Calu3 (cell line): ENCODE measurements at regions of chr15 and their contacts with region 1.

Region 1: DNA sequence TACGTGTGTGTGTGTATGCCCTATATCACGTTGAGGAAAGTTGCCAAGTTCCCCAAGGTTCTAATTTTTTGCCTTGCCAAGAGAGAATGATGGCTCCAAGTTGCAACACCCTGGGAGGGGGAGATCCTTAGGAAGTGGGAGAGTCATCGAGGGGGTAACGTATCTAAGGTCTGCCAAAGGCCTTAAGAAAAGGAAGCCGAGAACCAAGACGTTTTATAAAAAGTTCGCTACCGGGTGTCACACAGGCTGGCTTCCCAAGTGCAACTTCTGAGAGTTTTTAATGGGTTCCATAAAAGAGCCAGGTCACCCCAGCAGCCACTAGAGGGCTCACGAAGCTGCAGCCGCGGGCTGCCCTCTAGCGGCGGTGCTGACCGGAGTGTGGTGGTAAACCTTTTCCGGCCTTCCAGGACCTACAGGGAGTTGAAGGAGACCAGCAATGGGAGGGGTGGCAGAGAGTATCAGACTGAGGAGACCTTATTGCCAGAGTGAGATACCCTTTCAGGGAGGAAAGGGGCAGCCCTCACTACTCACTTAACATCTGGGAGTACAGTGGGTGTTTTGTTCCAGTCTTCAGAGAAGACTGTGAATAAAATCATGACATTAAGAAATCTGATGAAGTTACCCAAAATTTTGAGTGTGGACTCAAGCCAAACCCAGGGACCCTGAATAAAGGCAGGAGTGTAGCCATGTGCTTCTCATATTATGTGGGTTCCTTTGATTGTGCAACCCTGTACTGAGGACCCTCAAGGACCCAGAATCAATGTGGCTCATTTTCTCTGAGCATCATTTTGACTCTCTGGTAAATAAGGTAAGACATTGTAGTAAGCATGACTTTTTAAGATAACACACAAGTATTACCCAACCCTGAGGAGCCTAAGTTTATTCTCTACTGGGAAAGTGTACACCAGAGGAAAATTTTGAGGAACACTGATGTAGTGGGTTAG is 2.5 kb upstream of the RFX7 start:
- DNase-seq: peak; percentile 96
- H3K4me3 Mint-ChIP-seq: peak overlapping the region; percentile 87
- H3K27ac Mint-ChIP-seq: peak overlapping the region; percentile 78
- H3K4me1 Mint-ChIP-seq: peaks cover 39% of the 10 kb centered on the region
- H3K27me3 Mint-ChIP-seq: no peaks in the 10 kb centered on the region
- CTCF ChIP-seq: peak; percentile 100

Region 2: DNA sequence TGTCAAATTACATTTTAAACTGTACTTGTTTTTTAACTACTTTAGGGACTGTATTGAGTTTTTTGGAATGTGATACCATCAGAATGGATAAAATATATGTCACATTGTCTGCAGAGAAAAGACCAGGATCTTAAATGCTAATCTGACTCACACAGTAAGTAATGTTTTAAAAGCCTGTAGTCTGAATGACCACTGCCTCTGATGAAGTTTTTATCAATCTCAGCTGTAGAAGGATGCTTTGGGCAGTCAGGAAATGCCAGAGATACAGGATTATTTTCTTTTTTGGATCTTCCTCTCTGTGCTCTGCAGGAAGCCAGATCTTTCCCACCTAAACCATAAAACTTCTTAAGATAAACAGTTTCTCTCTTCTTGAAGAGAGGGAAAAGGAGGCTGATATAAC is 430.1 kb before region 1 on chr15:
- CTCF ChIA-PET with region 1: no interaction called
- intact Hi-C with region 1: no loop called
- DNase-seq: no peak
- H3K4me3 Mint-ChIP-seq: no peak overlapping the region
- H3K27ac Mint-ChIP-seq: no peak overlapping the region
- H3K4me1 Mint-ChIP-seq: no peaks in the 10 kb centered on the region
- H3K27me3 Mint-ChIP-seq: no peaks in the 10 kb centered on the region
- CTCF ChIP-seq: no peak

Region 3: DNA sequence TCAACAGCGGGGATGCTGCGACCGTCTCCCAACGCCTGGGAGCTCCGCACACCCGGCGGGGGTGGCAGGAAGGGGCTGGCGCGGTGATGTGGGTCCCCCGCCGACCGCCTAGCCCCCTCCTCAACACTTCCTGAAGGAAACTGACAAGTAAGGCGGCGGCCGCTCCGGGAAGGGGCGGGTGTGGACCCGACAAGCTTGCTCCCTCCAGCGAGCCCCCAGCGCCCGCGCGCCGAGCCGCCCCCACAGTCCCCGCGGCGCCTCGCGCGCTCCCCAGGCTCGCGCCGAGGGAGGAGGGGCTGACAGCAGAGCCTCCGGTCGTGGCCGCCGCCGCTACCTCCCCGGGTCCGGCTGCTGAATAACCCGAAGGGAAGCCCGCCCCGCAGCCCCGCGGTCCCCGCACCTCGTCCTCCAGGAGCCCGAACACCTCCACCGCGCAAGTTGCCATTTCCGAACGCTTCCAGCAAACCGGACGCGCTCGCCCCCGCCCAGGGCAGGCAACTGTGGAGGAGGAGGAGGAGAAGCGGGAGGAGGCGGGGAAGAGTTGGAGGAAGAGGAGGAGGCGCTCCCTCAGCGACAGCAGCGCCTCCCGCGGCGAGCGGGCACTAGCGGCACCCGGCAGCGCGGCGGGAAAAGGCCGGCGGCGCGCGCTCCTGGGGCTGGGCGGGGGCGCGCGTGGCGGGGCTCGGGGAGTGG is 252.9 kb before region 1 on chr15 and contains the start of gene NEDD4:
- CTCF ChIA-PET with region 1: no interaction called
- intact Hi-C with region 1: loop called (anchors 5 kb)
- DNase-seq: peak; percentile 93
- H3K4me3 Mint-ChIP-seq: peak within 1 kb of the TSS; percentile 89
- H3K27ac Mint-ChIP-seq: peak within 1 kb of the TSS; percentile 86
- H3K4me1 Mint-ChIP-seq: peaks cover 42% of the 10 kb centered on the region
- H3K27me3 Mint-ChIP-seq: no peaks in the 10 kb centered on the region
- CTCF ChIP-seq: peak; percentile 59
- total RNA-seq, gene NEDD4: 48.0 and 56.8 TPM in 2 replicates

Region 4: GRCh38 chr15:56040081-56041035 is 205.8 kb before region 1 on chr15:
- CTCF ChIA-PET with region 1: no interaction called
- intact Hi-C with region 1: loop called (anchors 2 kb)
- DNase-seq: peak; percentile 89
- H3K4me3 Mint-ChIP-seq: peak overlapping the region; percentile 50
- H3K27ac Mint-ChIP-seq: peak overlapping the region; percentile 96
- H3K4me1 Mint-ChIP-seq: peaks cover 79% of the 10 kb centered on the region
- H3K27me3 Mint-ChIP-seq: no peaks in the 10 kb centered on the region
- CTCF ChIP-seq: no peak

Region 5: DNA sequence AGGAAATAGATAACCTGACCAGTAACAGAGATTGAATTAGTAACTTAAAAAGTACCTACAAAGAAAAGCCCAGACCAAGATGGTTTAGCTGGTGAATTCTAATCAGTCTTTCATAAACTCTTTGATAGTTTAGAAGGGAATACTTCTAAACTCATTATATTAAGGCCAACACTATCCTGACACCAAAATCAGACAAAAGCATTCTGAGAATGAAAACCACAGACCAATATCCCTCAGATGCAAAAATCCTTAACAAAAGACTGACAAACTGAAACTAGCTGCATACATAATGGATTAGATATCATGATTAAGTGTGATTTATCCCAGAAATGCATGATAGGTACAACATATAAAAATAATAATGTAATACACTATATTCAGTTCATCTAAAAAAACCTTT is 118.1 kb before region 1 on chr15:
- CTCF ChIA-PET with region 1: no interaction called
- intact Hi-C with region 1: no loop called
- DNase-seq: no peak
- H3K4me3 Mint-ChIP-seq: no peak overlapping the region
- H3K27ac Mint-ChIP-seq: no peak overlapping the region
- H3K4me1 Mint-ChIP-seq: no peaks in the 10 kb centered on the region
- H3K27me3 Mint-ChIP-seq: no peaks in the 10 kb centered on the region
- CTCF ChIP-seq: no peak

Region 6: DNA sequence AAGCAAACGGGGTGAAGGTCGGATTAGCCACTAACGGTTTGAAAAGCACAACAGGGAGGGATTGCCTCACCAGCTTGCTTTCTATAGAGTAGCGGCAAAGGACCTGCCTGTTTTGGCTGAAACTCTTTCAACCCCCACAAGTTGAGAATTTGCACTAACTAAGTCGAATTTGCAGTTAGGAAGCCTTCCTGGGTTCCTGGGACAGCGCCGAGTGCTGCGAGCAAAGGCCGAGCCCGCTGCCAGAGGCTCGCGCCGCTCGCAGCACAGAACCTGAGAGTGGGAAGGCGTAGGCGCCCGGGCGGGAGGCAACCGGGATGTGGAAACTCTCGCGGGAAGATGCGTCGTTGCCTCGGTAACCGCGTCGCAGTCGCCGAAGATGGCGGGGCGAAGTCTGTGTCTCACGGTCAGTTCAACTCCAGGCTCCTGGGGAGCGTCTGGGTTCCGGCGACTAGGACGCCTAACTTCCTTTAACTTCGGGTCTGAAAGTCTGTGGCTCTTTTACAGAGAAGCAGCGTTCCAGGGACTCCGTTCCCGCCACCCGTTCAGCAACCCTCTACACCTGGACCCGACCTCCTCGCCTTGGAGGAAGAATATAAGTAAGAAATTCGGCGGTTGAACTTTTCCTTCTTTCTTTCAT is 119.0 kb after region 1 on chr15 and contains the start of gene TEX9:
- CTCF ChIA-PET with region 1: interaction called, 4 read pairs
- intact Hi-C with region 1: loop called (anchors 5 kb)
- DNase-seq: peak; percentile 92
- H3K4me3 Mint-ChIP-seq: peak within 1 kb of the TSS; percentile 97
- H3K27ac Mint-ChIP-seq: peak within 1 kb of the TSS; percentile 40
- H3K4me1 Mint-ChIP-seq: peaks cover 17% of the 10 kb centered on the region
- H3K27me3 Mint-ChIP-seq: no peaks in the 10 kb centered on the region
- CTCF ChIP-seq: no peak
- total RNA-seq, gene TEX9: 13.1 and 13.3 TPM in 2 replicates

Region 7: GRCh38 chr15:56428821-56429458 is 182.8 kb after region 1 on chr15:
- CTCF ChIA-PET with region 1: interaction called, 11 read pairs
- intact Hi-C with region 1: loop called (anchors 1 kb)
- DNase-seq: no peak
- H3K4me3 Mint-ChIP-seq: no peak overlapping the region
- H3K27ac Mint-ChIP-seq: no peak overlapping the region
- H3K4me1 Mint-ChIP-seq: no peaks in the 10 kb centered on the region
- H3K27me3 Mint-ChIP-seq: no peaks in the 10 kb centered on the region
- CTCF ChIP-seq: peak; percentile 37